Activated CD8-positive, alpha-beta T cell treated with anti-CD3 and anti-CD28 coated beads for 36 hours (primary cell): ENCODE measurements at regions of chr2 and their contacts with region 1.

Region 1: GRCh38 chr2:85561317-85561979 is at the start of gene GGCX:
- DNase-seq: peak; percentile 98
- ATAC-seq: peak; percentile 95
- H3K4me3 Mint-ChIP-seq: peak within 1 kb of the TSS; percentile 100
- H3K27ac Mint-ChIP-seq: peak within 1 kb of the TSS; percentile 100
- H3K4me1 Mint-ChIP-seq: peaks cover 32% of the 10 kb centered on the region
- H3K27me3 Mint-ChIP-seq: no peaks in the 10 kb centered on the region
- CTCF ChIP-seq: no peak
- total RNA-seq, gene GGCX: 14.6 to 16.7 TPM

Region 2: GRCh38 chr2:85490861-85491755 is 70.3 kb before region 1 on chr2:
- CTCF ChIA-PET with region 1: no interaction called
- POLR2A ChIA-PET with region 1: no interaction called
- intact Hi-C with region 1: no loop called
- DNase-seq: no peak
- ATAC-seq: no peak
- H3K4me3 Mint-ChIP-seq: no peak overlapping the region
- H3K27ac Mint-ChIP-seq: no peak overlapping the region
- H3K4me1 Mint-ChIP-seq: no peaks in the 10 kb centered on the region
- H3K27me3 Mint-ChIP-seq: no peaks in the 10 kb centered on the region
- CTCF ChIP-seq: no peak

Region 3: DNA sequence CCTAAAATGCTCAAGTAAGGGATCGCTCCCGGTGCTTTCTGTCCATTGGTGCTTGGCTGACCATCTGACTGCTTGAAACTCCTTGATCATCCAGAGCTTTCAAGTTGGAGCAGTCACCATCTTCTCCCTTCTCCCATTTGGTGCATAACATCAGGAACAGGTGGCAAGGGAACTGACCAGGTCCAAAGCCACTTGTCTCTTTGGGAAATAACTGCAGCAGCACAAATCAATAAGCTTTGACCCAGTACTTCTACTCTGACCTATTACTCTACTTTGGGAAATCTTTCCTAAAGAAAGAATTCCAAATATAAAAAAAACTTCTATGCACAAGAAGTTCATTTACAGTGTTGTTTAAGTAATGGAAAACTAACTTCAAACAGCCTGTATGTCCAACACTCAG is 33.1 kb before region 1 on chr2:
- CTCF ChIA-PET with region 1: no interaction called
- POLR2A ChIA-PET with region 1: no interaction called
- intact Hi-C with region 1: no loop called
- DNase-seq: no peak
- ATAC-seq: no peak
- H3K4me3 Mint-ChIP-seq: no peak overlapping the region
- H3K27ac Mint-ChIP-seq: no peak overlapping the region
- H3K4me1 Mint-ChIP-seq: no peaks in the 10 kb centered on the region
- H3K27me3 Mint-ChIP-seq: peaks cover 7% of the 10 kb centered on the region
- CTCF ChIP-seq: no peak

Region 4: GRCh38 chr2:85545780-85546240 is 15.6 kb before region 1 on chr2:
- CTCF ChIA-PET with region 1: interaction called, 35 read pairs
- POLR2A ChIA-PET with region 1: interaction called, 467 read pairs
- intact Hi-C with region 1: no loop called
- DNase-seq: no peak
- ATAC-seq: peak; percentile 5
- H3K4me3 Mint-ChIP-seq: no peak overlapping the region
- H3K27ac Mint-ChIP-seq: no peak overlapping the region
- H3K4me1 Mint-ChIP-seq: peaks cover 30% of the 10 kb centered on the region
- H3K27me3 Mint-ChIP-seq: no peaks in the 10 kb centered on the region
- CTCF ChIP-seq: no peak

Region 5: GRCh38 chr2:86062043-86062442 is 500.6 kb after region 1 on chr2:
- CTCF ChIA-PET with region 1: no interaction called
- POLR2A ChIA-PET with region 1: no interaction called
- intact Hi-C with region 1: no loop called
- DNase-seq: no peak
- ATAC-seq: no peak
- H3K4me3 Mint-ChIP-seq: no peak overlapping the region
- H3K27ac Mint-ChIP-seq: no peak overlapping the region
- H3K4me1 Mint-ChIP-seq: peaks cover 6% of the 10 kb centered on the region
- H3K27me3 Mint-ChIP-seq: no peaks in the 10 kb centered on the region
- CTCF ChIP-seq: no peak